ENCODE measurements at regions of chr1 and their contacts with region 1.

Region 1: DNA sequence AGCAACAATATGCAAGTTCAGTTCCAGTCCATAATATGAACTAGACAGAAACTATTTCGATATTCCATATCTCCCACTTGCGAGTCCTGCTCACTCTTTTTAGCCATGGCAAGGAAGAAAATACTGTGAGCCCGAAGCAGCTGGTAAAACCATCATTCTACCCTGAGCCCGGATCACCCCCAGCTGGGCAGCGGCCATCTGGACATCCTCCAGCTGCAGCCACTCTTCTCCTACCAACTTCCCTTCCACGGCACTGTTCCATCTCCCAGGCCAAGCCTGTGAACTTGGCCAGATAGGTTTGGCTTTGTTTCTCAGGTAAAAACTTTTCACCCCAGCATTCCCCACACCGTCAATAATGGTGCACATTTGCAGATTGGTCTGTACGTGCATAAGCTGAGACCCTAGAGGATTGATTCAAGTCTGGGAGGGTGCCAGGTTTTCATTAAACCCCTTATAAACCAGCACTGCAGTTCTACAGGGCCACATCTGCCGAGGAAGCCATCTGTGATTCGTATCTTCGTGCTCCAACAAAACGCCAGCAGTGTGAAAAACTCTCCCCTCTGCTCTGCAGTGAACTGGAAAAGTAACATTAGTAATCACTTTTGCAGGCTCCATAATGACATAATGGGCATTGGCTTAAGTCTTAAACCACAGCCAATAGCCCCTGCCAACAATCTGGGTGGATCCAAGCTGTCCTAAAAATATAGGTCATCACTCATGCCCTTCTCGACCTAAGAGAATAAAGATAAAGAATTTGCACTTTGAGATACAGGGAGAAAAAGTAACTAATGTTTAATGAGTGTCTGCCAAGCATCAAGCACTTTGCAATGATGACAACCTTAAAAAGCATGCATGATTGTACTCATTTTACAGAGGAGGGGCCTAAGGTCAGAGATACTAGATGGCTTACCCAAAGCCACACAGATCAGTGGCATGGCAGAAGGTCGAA is 205.1 kb downstream of the PLPP3 start:
- DNase-seq: no peak
- ATAC-seq: peak; percentile 12; the same call in 2 of the 3 replicates
- H3K4me3 ChIP-seq: no peak overlapping the region
- H3K27ac ChIP-seq: no peak overlapping the region
- H3K4me1 ChIP-seq: no peaks in the 10 kb centered on the region
- H3K27me3 ChIP-seq: no peaks in the 10 kb centered on the region; a peak in 1 of 4 replicates
- CTCF ChIP-seq: no peak
- EP300 ChIP-seq: no peak
- POLR2A ChIP-seq: no peak
- RAD21 ChIP-seq: no peak

Region 2: GRCh38 chr1:56120021-56120420 is 254.3 kb before region 1 on chr1:
- CTCF ChIA-PET with region 1: no interaction called
- POLR2A ChIA-PET with region 1: no interaction called
- RAD21 ChIA-PET with region 1: no interaction called
- SMC1A ChIA-PET with region 1: no interaction called
- in situ Hi-C with region 1: no loop called
- intact Hi-C with region 1: no loop called
- DNase-seq: no peak
- ATAC-seq: no peak
- H3K4me3 ChIP-seq: no peak overlapping the region
- H3K27ac ChIP-seq: no peak overlapping the region
- H3K4me1 ChIP-seq: no peaks in the 10 kb centered on the region
- H3K27me3 ChIP-seq: no peaks in the 10 kb centered on the region
- CTCF ChIP-seq: no peak
- EP300 ChIP-seq: no peak
- POLR2A ChIP-seq: no peak
- RAD21 ChIP-seq: no peak

Region 3: DNA sequence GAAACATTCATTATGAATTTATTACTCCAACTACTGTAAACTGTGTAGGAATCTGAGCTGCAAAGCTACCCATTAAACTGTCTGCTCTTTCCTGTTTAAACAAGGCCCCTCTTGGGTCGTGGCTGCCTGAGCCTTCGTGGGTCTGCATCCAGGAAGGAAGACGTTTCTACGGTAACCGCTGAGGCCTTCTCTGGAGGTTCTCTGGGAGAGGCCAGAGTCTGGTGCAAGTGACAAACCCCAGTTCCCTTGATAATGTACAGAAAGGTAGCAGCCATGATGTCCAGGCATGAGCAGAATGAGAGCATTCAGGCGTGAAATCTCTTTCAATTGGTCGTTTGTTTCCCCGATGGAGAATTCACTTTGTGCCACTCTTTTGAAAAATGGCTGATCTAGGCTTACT is 145.1 kb before region 1 on chr1:
- CTCF ChIA-PET with region 1: no interaction called
- POLR2A ChIA-PET with region 1: no interaction called
- RAD21 ChIA-PET with region 1: no interaction called
- SMC1A ChIA-PET with region 1: no interaction called
- in situ Hi-C with region 1: no loop called
- intact Hi-C with region 1: no loop called
- DNase-seq: no peak
- ATAC-seq: no peak
- H3K4me3 ChIP-seq: no peak overlapping the region
- H3K27ac ChIP-seq: no peak overlapping the region
- H3K4me1 ChIP-seq: no peaks in the 10 kb centered on the region
- H3K27me3 ChIP-seq: no peaks in the 10 kb centered on the region
- CTCF ChIP-seq: no peak
- EP300 ChIP-seq: no peak
- POLR2A ChIP-seq: no peak
- RAD21 ChIP-seq: no peak

Region 4: GRCh38 chr1:56387071-56387740 is 12.9 kb after region 1 on chr1:
- CTCF ChIA-PET with region 1: interaction called, 4 read pairs
- POLR2A ChIA-PET with region 1: interaction called, 9 read pairs
- RAD21 ChIA-PET with region 1: no interaction called
- SMC1A ChIA-PET with region 1: interaction called, 22 read pairs
- in situ Hi-C with region 1: no loop called
- intact Hi-C with region 1: no loop called
- DNase-seq: no peak
- ATAC-seq: no peak; the same call in 2 of the 3 replicates
- H3K4me3 ChIP-seq: no peak overlapping the region
- H3K27ac ChIP-seq: no peak overlapping the region
- H3K4me1 ChIP-seq: no peaks in the 10 kb centered on the region
- H3K27me3 ChIP-seq: no peaks in the 10 kb centered on the region
- CTCF ChIP-seq: no peak
- EP300 ChIP-seq: no peak
- POLR2A ChIP-seq: no peak
- RAD21 ChIP-seq: no peak

Region 5: GRCh38 chr1:56416471-56416882 is 42.2 kb after region 1 on chr1:
- CTCF ChIA-PET with region 1: no interaction called
- POLR2A ChIA-PET with region 1: no interaction called
- RAD21 ChIA-PET with region 1: no interaction called
- SMC1A ChIA-PET with region 1: no interaction called
- in situ Hi-C with region 1: no loop called
- intact Hi-C with region 1: no loop called
- DNase-seq: no peak
- ATAC-seq: peak; percentile 55
- H3K4me3 ChIP-seq: no peak overlapping the region
- H3K27ac ChIP-seq: no peak overlapping the region
- H3K4me1 ChIP-seq: no peaks in the 10 kb centered on the region
- H3K27me3 ChIP-seq: no peaks in the 10 kb centered on the region
- CTCF ChIP-seq: no peak
- EP300 ChIP-seq: no peak
- POLR2A ChIP-seq: no peak
- RAD21 ChIP-seq: no peak

Region 6: DNA sequence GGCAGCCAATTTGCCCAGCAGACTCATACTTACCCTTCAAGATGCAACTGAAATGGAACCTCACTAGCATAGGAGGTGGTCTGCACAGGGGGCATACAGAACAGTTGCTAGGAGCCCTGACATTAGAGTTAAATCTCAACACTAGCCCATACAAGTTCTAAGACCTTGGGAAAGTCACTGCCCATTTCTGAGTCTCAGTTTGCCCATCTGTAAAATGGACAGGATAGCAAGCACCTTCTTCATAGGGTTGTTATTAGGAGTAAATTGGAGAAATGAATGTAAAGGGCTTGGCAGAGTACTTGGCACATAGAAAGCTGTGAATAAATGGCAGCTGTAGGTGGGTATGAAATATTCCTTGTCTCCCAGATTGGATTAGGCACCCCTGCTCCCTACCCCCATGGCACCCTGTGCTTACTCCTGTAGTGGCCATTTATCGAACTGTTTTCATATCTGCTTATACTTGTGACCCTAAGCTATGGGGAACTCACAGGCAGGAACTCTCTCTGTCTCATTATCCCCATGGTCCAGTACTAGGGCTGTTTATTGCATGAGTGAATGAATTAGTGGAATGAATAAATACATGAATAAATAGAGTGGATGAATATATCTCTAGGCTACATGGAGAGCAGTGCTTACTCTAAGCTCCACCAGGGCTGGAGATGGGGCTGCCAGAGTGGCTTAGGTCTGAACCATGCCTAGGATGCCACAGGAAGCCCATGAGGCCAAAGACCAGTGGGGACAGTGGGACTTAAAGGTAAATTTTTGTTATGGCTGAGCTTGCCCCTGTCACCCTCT is 52.5 kb after region 1 on chr1:
- CTCF ChIA-PET with region 1: no interaction called
- POLR2A ChIA-PET with region 1: no interaction called
- RAD21 ChIA-PET with region 1: no interaction called
- SMC1A ChIA-PET with region 1: no interaction called
- in situ Hi-C with region 1: no loop called
- intact Hi-C with region 1: no loop called
- DNase-seq: no peak
- ATAC-seq: no peak
- H3K4me3 ChIP-seq: no peak overlapping the region
- H3K27ac ChIP-seq: no peak overlapping the region
- H3K4me1 ChIP-seq: no peaks in the 10 kb centered on the region
- H3K27me3 ChIP-seq: no peaks in the 10 kb centered on the region; a peak in 2 of 4 replicates
- CTCF ChIP-seq: no peak
- EP300 ChIP-seq: no peak
- POLR2A ChIP-seq: no peak
- RAD21 ChIP-seq: no peak

Measured in GM12878 (cell line).